Spleen (tissue), 13 donors: ENCODE measurements at regions of chr3 and their contacts with region 1.

Region 1: DNA sequence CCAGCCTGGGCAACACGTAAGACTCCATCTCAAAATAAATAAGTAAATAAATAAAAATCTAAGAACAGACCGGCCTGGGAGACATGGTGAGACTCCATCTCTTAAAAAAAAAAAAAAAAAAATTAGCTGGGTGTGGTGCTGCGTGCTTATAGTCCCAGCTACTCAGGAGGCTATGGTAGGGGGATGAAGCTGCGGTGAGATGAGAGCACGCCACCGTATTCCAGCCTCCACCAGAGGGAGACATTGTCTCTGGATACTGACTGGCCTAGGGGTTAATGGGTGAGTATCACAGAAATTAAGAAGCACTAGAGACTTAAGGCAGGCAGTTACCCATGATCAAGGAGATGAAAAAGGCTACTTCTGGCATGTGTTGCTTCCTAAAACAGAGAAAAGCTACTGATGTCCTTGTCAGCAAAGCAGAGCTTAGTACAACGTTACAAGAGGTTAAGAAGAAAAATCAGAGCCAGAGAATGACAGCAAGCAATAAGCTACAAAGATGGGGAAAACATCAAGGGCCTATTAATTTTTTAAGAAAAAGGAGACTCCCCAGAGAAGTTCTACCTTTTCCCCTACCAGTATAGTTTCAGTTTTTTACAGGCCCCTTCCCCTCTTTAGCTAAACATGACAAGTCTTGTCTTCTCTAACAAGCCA is 8.6 kb downstream of the TFRC start:
- DNase-seq: no peak
- H3K4me3 ChIP-seq: no peak overlapping the region
- H3K27ac ChIP-seq: peak overlapping the region in 2 of 8 donors; percentile 5 to 19
- H3K4me1 ChIP-seq: peaks cover 0 to 40% (median 4%) of the 10 kb centered on the region in 6 donors
- H3K27me3 ChIP-seq: no peaks in the 10 kb centered on the region
- CTCF ChIP-seq: peak; percentile 66 to 89 (median 83)
- POLR2A ChIP-seq: peak in 1 of 3 donors; percentile 9

Region 2: DNA sequence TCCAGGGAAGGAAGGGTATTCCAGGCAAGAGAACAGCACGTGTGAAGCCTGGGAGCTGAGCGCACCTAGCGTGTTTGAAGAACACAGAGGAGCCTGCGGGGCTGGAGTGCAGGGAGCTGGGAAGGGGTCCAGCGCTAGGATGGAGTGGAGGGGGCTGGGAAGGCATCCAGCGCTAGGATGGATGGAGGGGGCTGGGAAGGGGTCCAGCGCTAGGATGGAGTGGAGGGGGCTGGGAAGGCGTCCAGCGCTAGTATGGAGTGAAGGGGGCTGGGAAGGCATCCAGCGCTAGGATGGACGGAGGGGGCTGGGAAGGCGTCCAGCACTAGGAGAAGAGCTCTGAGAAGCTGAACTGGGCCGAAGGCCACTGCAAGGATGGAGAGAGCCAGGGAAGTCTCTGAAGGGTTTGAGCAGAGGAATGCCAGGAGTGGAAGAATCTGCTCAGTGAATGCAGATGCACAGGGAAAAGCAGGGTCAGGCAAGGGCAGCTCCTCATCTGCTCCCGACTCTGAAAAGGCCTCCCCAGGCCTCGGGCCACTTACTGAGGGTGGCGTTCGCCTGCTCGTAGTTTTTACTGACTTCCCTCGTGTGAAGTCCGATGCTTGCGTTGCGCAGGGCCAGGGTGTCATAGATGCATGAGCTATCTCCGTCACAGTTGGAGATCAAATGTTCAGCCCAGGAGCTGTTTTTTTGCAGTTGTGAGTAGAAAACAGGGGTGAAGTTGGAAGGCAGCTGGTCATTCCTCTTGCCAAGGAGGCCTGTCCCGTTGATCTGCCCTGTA is 312.8 kb before region 1 on chr3:
- intact Hi-C with region 1: no loop called
- DNase-seq: peak; percentile 45
- H3K4me3 ChIP-seq: no peak overlapping the region
- H3K27ac ChIP-seq: no peak overlapping the region
- H3K4me1 ChIP-seq: peaks cover 0 to 36% (median 20%) of the 10 kb centered on the region in 6 donors
- H3K27me3 ChIP-seq: peaks cover 0 to 86% (median 23%) of the 10 kb centered on the region in 7 donors
- CTCF ChIP-seq: no peak
- POLR2A ChIP-seq: no peak

Region 3: DNA sequence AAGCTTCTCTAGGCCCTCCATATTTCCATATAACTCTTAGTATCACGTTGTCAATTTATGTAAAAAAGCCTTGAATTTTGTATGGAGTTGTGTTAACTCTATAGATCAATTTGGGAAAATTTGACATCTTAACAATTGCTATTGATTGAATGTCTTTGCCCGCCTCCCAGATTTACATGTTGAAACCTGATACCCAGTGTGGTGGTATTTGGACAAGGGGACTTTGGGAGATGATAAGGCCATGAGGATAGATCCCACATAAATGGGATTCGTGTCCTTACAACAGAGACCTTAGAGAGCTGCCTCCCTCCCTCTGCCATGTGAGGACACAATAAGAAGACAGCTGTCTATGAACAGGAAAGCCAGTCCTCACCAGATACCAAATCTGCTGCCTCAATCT is 143.9 kb before region 1 on chr3:
- intact Hi-C with region 1: no loop called
- DNase-seq: no peak
- H3K4me3 ChIP-seq: no peak overlapping the region
- H3K27ac ChIP-seq: no peak overlapping the region
- H3K4me1 ChIP-seq: no peaks in the 10 kb centered on the region
- H3K27me3 ChIP-seq: no peaks in the 10 kb centered on the region
- CTCF ChIP-seq: no peak
- POLR2A ChIP-seq: no peak

Region 4: DNA sequence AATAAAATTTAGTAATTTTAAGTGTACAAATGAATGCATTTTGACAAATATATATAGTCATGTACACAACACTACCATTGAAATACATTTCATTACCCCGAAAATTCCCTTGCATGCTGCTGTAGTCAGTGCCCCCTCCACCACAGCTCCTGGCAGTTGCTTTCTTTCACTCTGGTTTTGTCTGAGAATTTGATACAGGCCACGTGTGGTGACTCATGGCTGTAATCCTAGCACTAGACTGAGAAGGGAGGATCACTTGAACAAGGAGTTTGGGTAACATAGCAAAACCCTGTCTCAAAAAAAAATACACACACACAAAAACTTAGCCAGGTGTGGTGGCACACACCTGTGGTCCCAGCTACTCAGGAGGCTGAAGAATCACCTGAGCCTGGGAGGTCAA is 56.8 kb before region 1 on chr3:
- intact Hi-C with region 1: no loop called
- DNase-seq: no peak
- H3K4me3 ChIP-seq: no peak overlapping the region
- H3K27ac ChIP-seq: no peak overlapping the region
- H3K4me1 ChIP-seq: no peaks in the 10 kb centered on the region
- H3K27me3 ChIP-seq: peaks cover 0 to 4% (median 0%) of the 10 kb centered on the region in 7 donors
- CTCF ChIP-seq: no peak
- POLR2A ChIP-seq: no peak

Region 5: DNA sequence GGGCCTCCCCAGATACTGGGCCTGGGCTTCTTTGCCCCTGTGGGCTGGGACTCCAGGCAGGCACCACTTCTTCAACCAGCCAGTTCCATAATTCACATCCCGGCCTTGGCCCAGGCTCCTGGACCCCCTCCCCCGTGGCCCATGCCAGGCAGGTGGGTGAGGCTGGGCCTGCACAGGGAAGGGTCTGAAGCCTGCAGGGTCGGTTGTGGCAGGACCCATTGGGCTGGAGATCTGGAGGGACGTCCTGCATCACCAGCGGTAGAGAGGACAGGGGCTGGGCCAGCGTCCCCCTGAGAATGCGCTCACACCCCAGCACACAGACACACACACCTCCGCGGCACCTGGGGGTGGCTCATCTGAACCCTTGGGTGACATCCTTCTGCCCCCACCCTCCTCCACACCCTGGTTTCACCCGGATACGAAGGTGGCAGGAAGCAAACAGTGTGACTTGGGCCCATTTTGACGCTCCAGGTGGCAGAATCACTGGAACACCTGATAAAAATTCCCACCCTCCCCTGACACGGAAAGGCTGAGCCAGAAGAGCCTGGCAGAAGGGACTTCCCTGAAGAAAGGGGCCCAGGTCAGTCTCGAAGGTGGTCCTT is 122.5 kb after region 1 on chr3:
- intact Hi-C with region 1: loop called (anchors 2 kb)
- DNase-seq: peak; percentile 72
- H3K4me3 ChIP-seq: no peak overlapping the region
- H3K27ac ChIP-seq: peak overlapping the region in 2 of 8 donors; percentile 42 to 93
- H3K4me1 ChIP-seq: peaks cover 6 to 62% (median 39%) of the 10 kb centered on the region in 6 donors
- H3K27me3 ChIP-seq: no peaks in the 10 kb centered on the region
- CTCF ChIP-seq: no peak
- POLR2A ChIP-seq: no peak

Region 6: DNA sequence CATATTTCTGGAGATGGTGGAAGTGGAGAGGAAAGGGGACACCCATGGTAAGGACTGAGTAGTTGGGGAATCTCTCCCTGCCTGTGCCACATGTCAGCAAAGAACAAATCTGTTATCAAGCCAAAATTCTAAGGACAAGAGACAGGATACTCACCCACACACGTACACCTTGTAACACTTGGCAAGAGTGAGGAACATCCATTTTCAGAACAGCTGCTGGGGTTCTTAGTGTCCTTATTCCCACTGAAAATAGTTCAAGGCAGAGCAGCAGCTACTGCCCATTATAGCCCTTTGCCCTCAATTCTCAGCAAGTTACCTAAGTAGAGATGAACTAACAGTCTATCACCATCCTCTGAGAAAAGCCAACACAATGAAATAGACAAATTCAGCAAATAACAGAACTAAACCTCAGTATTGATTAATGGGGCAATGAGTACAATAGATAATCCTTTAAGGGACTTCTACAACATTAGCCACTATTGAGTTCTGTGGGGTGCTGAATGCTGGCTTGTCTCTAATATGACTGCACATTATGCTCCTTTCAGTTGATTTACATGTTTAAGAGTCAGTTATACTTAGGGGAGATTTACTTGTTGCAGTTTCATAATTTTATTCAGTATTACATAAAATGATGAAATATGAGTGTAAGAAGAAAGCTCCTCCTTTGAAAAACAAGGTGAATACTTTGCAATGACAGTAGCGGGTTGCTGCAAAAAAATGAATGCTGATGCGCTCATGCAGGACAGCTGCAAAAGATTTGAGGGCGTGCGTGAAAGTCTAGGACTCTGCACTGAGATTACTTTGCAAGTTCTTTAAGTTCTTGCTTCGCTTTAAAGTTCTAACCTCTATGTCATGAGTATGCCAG is 816.8 kb after region 1 on chr3:
- intact Hi-C with region 1: no loop called
- DNase-seq: no peak
- H3K4me3 ChIP-seq: no peak overlapping the region
- H3K27ac ChIP-seq: no peak overlapping the region
- H3K4me1 ChIP-seq: peaks cover 5 to 59% (median 18%) of the 10 kb centered on the region in 6 donors
- H3K27me3 ChIP-seq: no peaks in the 10 kb centered on the region
- CTCF ChIP-seq: no peak
- POLR2A ChIP-seq: no peak